Dendritic cell treated with granulocyte-macrophage colony-stimulating factor and Interleukin-4, amounts not matched to agents 40 ng/mL and 50 ng/mL, for 4 days (primary cell): ENCODE measurements at regions of chr18 and their contacts with region 1.

Region 1: DNA sequence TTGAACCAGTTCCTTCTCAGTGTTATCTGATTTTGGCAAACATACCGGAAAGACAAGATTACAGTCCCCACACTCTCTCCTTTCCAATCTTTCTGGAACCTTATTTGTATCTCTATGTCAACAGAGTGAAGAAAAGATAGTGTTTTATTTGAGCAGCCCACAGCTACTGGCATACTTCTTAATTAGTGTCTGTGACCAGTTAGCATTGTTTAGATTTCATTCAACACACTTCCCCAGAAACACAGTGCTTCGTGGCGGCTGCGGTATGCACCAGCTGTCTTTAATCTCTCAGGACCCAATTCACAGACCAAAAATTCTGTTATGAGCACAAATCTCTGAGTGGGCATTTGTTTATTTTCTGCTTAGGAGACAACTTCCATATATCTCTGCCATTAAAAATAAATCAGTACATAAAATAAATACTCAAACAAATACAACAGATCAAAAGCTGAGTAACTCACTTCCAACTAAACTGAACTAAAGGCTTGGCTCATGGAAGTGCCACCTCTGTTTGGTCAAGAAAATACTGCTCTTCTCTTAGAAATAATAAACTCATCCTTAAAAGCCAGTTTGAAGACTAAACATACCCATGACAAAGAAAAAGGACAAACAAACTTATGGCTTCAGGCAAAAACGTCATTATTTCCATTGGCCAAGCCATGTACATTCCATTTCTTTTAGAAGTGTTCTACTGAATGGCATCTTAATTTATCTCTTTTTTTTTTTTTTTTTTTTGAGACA is 392.4 kb downstream of the TXNL1 start:
- H3K4me3 Mint-ChIP-seq: no peak overlapping the region
- H3K27ac Mint-ChIP-seq: no peak overlapping the region
- H3K4me1 Mint-ChIP-seq: no peaks in the 10 kb centered on the region
- H3K27me3 Mint-ChIP-seq: no peaks in the 10 kb centered on the region

Region 2: GRCh38 chr18:55907453-55908175 is 338.4 kb before region 1 on chr18:
- intact Hi-C with region 1: no loop called
- H3K4me3 Mint-ChIP-seq: no peak overlapping the region
- H3K27ac Mint-ChIP-seq: no peak overlapping the region
- H3K4me1 Mint-ChIP-seq: no peaks in the 10 kb centered on the region
- H3K27me3 Mint-ChIP-seq: no peaks in the 10 kb centered on the region

Region 3: GRCh38 chr18:56235481-56236013 is 10.5 kb before region 1 on chr18:
- intact Hi-C with region 1: loop called (anchors 1 kb)
- H3K4me3 Mint-ChIP-seq: no peak overlapping the region
- H3K27ac Mint-ChIP-seq: no peak overlapping the region
- H3K4me1 Mint-ChIP-seq: peaks cover 13% of the 10 kb centered on the region
- H3K27me3 Mint-ChIP-seq: peaks cover 1% of the 10 kb centered on the region